ENCODE measurements at regions of chr1 and their contacts with region 1.

Region 1: DNA sequence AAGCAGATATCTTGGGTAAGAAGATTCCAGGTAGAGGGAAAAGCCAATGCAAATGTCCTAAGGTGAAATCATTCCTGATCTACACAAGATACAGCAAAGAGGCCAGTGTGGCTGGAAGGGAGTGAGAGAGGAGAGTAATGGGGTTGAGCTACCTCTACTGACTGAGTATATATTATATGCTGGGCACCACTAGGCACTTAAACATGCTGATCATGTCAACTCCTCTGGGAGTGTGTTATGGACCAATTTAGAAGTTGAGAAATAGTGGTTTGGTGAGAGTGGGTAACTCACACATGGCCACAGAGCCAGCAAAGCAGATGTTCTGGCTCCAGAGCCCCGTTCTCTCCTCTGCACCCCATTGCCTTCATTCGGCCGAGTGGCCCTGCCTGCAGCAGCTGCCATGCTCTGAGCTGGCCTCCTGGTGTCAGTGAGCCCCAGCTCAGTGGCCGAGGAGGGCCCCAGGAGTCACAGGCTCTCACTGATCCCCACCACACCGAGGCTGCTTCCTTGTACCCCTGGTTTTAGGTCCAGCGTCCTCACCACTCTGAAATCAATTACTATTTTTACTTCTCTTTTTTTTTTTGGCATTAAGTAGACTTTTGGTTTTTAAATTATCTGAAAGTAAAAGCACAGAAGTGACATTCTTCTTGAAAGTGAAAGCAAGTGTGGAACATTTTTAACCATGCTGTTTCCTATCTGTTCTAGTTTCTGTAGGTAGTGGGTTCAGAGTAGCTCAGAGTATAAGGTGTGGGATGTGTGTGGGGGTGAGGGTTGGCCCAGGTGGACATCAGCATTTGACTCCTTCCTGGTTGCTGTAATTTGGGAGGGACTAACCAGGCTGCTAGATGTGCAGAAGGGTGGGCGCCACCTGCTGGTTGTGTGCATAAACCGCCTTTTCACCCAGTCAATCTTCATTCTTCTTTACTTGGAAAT is 45.8 kb upstream of the CRNN start:
- DNase-seq: peak; percentile 47
- H3K4me3 ChIP-seq: peak overlapping the region; percentile 24 to 39; a peak in 3 of 4 replicates
- H3K27ac ChIP-seq: no peak overlapping the region
- H3K4me1 ChIP-seq: peaks cover 0 to 2% of the 10 kb centered on the region in 2 experiments; a peak in 1 of 4 replicates
- H3K27me3 ChIP-seq: peaks cover 4% of the 10 kb centered on the region; the same call in 1 of the 2 replicates
- CTCF ChIP-seq: peak; percentile 90
- EP300 ChIP-seq: no peak
- RAD21 ChIP-seq: 0 out of 2 replicates have a peak, but pooled peaks have one; percentile 15

Region 2: GRCh38 chr1:152047730-152048402 is 412.0 kb before region 1 on chr1:
- CTCF ChIA-PET with region 1: interaction called, 21 read pairs
- POLR2A ChIA-PET with region 1: no interaction called
- DNase-seq: peak; percentile 78
- H3K4me3 ChIP-seq: peak overlapping the region; percentile 27 to 55
- H3K27ac ChIP-seq: peak overlapping the region; percentile 90 to 97
- H3K4me1 ChIP-seq: peaks cover 11 to 12% of the 10 kb centered on the region in 2 experiments; a peak in 3 of 4 replicates
- H3K27me3 ChIP-seq: peaks cover 5% of the 10 kb centered on the region; the same call in 1 of the 2 replicates
- CTCF ChIP-seq: peak; percentile 67
- EP300 ChIP-seq: peak; percentile 15 to 53; a peak in 2 of 4 replicates
- RAD21 ChIP-seq: no peak

Region 3: GRCh38 chr1:152347116-152347728 is 112.6 kb before region 1 on chr1:
- CTCF ChIA-PET with region 1: interaction called, 15 read pairs
- POLR2A ChIA-PET with region 1: no interaction called
- DNase-seq: peak; percentile 10
- H3K4me3 ChIP-seq: no peak overlapping the region; a peak in 1 of 4 replicates
- H3K27ac ChIP-seq: no peak overlapping the region
- H3K4me1 ChIP-seq: no peaks in the 10 kb centered on the region
- H3K27me3 ChIP-seq: no peaks in the 10 kb centered on the region
- CTCF ChIP-seq: peak; percentile 82
- EP300 ChIP-seq: no peak
- RAD21 ChIP-seq: peak; percentile 52

Region 4: GRCh38 chr1:152440635-152441471 is 19.0 kb before region 1 on chr1:
- CTCF ChIA-PET with region 1: interaction called, 30 read pairs
- POLR2A ChIA-PET with region 1: no interaction called
- DNase-seq: peak; percentile 66
- H3K4me3 ChIP-seq: no peak overlapping the region
- H3K27ac ChIP-seq: no peak overlapping the region
- H3K4me1 ChIP-seq: 0 out of 4 replicates have a peak, but pooled peaks cover 0 to 5% of the 10 kb centered on the region in 2 experiments
- H3K27me3 ChIP-seq: peaks cover 40% of the 10 kb centered on the region; the same call in 1 of the 2 replicates
- CTCF ChIP-seq: peak; percentile 78
- EP300 ChIP-seq: no peak
- RAD21 ChIP-seq: peak; percentile 67

Region 5: DNA sequence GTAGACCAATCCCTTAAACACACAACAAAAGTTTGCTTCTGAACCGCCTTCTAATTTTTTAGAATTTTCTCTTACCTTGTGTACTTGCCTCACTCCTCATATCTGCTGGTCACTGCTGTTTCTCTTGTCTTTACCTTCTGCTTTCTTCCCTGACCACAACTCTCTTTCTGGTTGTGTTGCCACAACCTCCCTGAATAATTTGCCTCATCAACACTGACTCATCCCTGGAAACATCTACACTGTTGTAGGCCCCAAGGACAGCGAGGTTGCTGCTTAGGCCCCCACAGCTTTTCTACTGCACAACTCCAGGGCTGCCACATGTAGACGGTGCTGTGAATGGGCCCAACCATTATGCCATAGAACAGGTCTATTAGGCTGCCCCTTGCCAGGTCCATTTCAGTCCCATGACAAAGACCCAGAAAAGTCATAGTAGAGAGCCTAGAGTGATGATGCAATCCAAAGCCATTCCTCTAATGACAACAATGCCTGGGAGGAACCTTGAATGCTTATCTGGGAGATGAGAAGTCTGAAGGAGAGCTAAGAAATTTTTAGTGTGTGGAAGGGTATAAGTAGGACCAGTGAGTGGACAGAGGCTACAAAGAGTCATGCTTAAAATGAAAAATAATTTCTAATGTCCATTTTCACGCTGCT is 14.2 kb after region 1 on chr1:
- CTCF ChIA-PET with region 1: interaction called, 14 read pairs
- POLR2A ChIA-PET with region 1: no interaction called
- DNase-seq: no peak
- H3K4me3 ChIP-seq: no peak overlapping the region
- H3K27ac ChIP-seq: no peak overlapping the region
- H3K4me1 ChIP-seq: no peaks in the 10 kb centered on the region
- H3K27me3 ChIP-seq: 0 out of 2 replicates have a peak, but pooled peaks cover 5% of the 10 kb centered on the region
- CTCF ChIP-seq: no peak
- EP300 ChIP-seq: no peak
- RAD21 ChIP-seq: no peak

Measured in SK-N-SH (cell line).